MCF 10A (cell line): ENCODE measurements at regions of chr2 and their contacts with region 1.

Region 1: GRCh38 chr2:152466980-152467676 is 132.2 kb downstream of the FMNL2 start:
- DNase-seq: peak; percentile 95
- H3K4me3 Mint-ChIP-seq: peak overlapping the region; percentile 66
- H3K27ac Mint-ChIP-seq: peak overlapping the region; percentile 95
- H3K4me1 Mint-ChIP-seq: peaks cover 55% of the 10 kb centered on the region
- H3K27me3 Mint-ChIP-seq: no peaks in the 10 kb centered on the region
- CTCF ChIP-seq: no peak

Region 2: DNA sequence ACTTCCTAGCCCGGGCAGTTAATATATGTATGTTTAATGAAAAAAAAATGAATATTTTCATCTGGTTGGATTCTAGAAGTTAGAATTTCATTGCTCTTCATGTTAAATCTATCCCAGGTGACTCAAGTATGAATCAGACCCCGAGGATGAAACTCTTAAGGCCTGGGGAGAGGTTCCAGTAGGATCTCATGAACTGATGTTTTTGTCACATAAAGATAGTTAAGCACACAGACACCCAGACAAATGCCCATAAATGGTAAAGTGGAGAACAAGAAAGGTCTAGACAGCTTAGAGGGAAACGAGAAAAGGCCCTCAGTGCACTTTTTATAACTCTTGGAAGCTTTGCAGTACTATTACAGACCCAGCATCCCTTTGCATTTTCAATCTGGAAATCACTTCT is 943.3 kb before region 1 on chr2:
- CTCF ChIA-PET with region 1: no interaction called
- POLR2A ChIA-PET with region 1: no interaction called
- intact Hi-C with region 1: no loop called
- DNase-seq: peak; percentile 1
- H3K4me3 Mint-ChIP-seq: no peak overlapping the region
- H3K27ac Mint-ChIP-seq: no peak overlapping the region
- H3K4me1 Mint-ChIP-seq: peaks cover 3% of the 10 kb centered on the region
- H3K27me3 Mint-ChIP-seq: no peaks in the 10 kb centered on the region
- CTCF ChIP-seq: no peak

Region 3: DNA sequence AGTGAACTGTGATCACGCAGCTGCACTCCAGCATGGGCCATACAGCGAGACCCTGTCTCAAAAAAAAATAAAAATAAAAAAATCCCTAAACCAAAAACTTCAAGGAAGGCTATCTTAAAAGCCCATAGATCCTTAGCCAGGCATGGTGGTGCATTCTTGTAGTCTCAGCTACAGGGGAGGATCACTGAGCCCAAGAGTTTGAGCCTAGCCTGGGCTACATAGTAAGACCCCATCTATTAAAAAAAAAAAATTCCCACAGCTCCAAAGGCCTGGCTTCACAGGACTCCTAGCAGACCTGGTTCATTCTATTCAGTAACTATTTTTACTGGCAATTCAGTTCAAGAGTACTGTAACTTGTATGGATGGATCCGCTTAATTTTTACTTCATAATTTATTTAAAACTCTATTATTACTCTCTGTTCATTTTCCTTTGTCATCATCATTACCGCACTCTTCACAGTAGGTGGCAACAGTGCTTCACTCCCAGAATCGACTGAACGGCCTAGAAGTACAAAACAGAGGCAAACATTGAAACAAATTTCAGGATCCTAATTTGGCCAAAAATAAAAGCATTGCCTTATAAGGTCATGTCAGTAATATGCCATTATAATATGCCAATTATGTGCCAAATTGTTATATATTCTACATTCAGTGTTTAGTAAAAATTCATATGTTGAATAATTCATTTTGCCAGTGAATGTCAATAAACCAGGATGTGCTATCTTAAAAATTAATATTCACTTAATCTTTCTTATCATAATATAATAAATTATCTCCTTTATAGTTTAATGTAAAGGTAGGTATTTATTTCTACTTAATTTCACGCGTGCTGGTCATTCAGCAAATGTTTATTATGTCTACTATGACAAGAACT is 277.3 kb before region 1 on chr2:
- CTCF ChIA-PET with region 1: interaction called, 8 read pairs
- POLR2A ChIA-PET with region 1: interaction called, 4 read pairs
- intact Hi-C with region 1: loop called (anchors 1 kb)
- DNase-seq: peak; percentile 85
- H3K4me3 Mint-ChIP-seq: no peak overlapping the region
- H3K27ac Mint-ChIP-seq: no peak overlapping the region
- H3K4me1 Mint-ChIP-seq: no peaks in the 10 kb centered on the region
- H3K27me3 Mint-ChIP-seq: no peaks in the 10 kb centered on the region
- CTCF ChIP-seq: peak; percentile 84

Region 4: GRCh38 chr2:152376385-152376784 is 90.7 kb before region 1 on chr2:
- CTCF ChIA-PET with region 1: no interaction called
- POLR2A ChIA-PET with region 1: no interaction called
- intact Hi-C with region 1: no loop called
- DNase-seq: peak; percentile 38
- H3K4me3 Mint-ChIP-seq: no peak overlapping the region
- H3K27ac Mint-ChIP-seq: no peak overlapping the region
- H3K4me1 Mint-ChIP-seq: peaks cover 19% of the 10 kb centered on the region
- H3K27me3 Mint-ChIP-seq: no peaks in the 10 kb centered on the region
- CTCF ChIP-seq: no peak

Region 5: DNA sequence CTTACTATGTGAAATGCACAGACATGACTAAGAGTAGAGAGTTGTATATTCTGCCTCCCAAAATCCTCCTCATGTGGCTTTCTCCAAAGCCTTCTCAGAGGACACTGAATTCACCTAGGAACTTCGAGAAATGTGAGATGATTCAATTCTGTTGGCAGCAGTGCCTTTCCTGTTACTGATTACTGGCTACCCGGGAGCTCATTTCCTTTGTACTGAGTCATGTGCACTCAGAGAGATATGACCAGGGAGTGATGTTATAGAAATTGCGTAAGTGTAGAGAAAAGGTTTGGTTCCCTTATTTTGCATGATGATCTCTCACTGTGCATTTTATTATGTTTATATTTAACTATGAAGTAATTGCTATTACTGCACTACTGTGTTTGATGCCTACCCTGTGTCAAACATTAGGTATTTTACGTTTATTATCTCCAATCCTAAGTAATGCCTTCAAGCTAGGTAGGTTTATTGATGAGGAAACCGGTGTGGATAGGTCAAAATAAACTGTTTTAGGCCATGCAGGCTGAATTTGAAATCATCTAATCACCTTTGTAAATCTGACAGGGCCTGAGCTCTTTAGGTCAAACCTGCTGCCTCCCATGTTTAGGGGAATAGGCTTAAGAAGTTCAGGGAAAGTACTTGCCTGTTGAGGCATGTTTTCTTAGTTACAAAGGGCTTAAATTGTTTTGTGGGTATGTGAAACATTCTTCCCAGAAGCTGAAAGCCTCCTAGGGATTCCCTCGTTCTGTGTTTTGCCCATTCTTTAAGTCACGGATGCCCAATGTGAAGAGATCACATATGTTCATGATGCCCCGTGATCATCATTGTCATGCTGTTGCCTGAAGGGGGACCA is 45.4 kb before region 1 on chr2:
- CTCF ChIA-PET with region 1: interaction called, 4 read pairs
- POLR2A ChIA-PET with region 1: interaction called, 33 read pairs
- intact Hi-C with region 1: no loop called
- DNase-seq: peak; percentile 98
- H3K4me3 Mint-ChIP-seq: peak overlapping the region; percentile 30
- H3K27ac Mint-ChIP-seq: peak overlapping the region; percentile 69
- H3K4me1 Mint-ChIP-seq: peaks cover 27% of the 10 kb centered on the region
- H3K27me3 Mint-ChIP-seq: no peaks in the 10 kb centered on the region
- CTCF ChIP-seq: no peak

Region 6: DNA sequence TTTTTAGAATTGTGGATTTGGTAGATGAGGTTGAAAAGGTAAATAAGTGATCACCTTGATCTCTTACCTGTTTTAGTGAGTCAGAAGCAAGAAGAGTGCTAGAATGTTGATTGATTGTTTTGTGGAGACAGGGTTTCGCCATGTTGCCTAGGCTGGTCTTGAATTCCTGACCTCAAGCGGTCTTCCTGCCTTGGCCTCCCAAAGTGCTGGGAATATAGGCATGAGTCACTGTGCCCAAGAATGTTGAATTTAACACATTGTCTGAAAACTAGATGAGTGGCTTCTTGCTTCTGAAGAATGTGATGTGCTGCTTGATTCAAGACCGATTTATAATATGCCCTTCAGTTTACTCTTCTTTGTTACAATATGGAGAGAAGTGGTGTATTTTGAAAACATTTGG is 10.9 kb before region 1 on chr2:
- CTCF ChIA-PET with region 1: interaction called, 11 read pairs
- POLR2A ChIA-PET with region 1: interaction called, 23 read pairs
- intact Hi-C with region 1: no loop called
- DNase-seq: peak; percentile 73
- H3K4me3 Mint-ChIP-seq: no peak overlapping the region
- H3K27ac Mint-ChIP-seq: peak overlapping the region; percentile 64
- H3K4me1 Mint-ChIP-seq: peaks cover 21% of the 10 kb centered on the region
- H3K27me3 Mint-ChIP-seq: no peaks in the 10 kb centered on the region
- CTCF ChIP-seq: no peak

Region 7: GRCh38 chr2:152505495-152505906 is 38.4 kb after region 1 on chr2:
- CTCF ChIA-PET with region 1: interaction called, 8 read pairs
- POLR2A ChIA-PET with region 1: interaction called, 63 read pairs
- intact Hi-C with region 1: loop called (anchors 5 kb)
- DNase-seq: peak; percentile 77
- H3K4me3 Mint-ChIP-seq: peak overlapping the region; percentile 58
- H3K27ac Mint-ChIP-seq: peak overlapping the region; percentile 91
- H3K4me1 Mint-ChIP-seq: peaks cover 47% of the 10 kb centered on the region
- H3K27me3 Mint-ChIP-seq: no peaks in the 10 kb centered on the region
- CTCF ChIP-seq: no peak

Region 8: GRCh38 chr2:152635635-152636298 is 168.6 kb after region 1 on chr2:
- CTCF ChIA-PET with region 1: interaction called, 11 read pairs
- POLR2A ChIA-PET with region 1: interaction called, 7 read pairs
- intact Hi-C with region 1: no loop called
- DNase-seq: peak; percentile 72
- H3K4me3 Mint-ChIP-seq: no peak overlapping the region
- H3K27ac Mint-ChIP-seq: no peak overlapping the region
- H3K4me1 Mint-ChIP-seq: no peaks in the 10 kb centered on the region
- H3K27me3 Mint-ChIP-seq: no peaks in the 10 kb centered on the region
- CTCF ChIP-seq: peak; percentile 77